Activated naive CD4-positive, alpha-beta T cell treated with anti-CD3 and anti-CD28 coated beads for 36 hours (primary cell): ENCODE measurements at regions of chr2 and their contacts with region 1.

Region 1: GRCh38 chr2:240560480-240561326 is 546 bp downstream of the DUSP28 start:
- DNase-seq: peak; percentile 100
- H3K4me3 Mint-ChIP-seq: peak overlapping the region; percentile 94
- H3K27ac Mint-ChIP-seq: peak overlapping the region; percentile 99
- H3K4me1 Mint-ChIP-seq: peaks cover 69% of the 10 kb centered on the region
- H3K27me3 Mint-ChIP-seq: no peaks in the 10 kb centered on the region

Region 2: GRCh38 chr2:240586198-240586918 is 25.7 kb after region 1 on chr2 and contains the start of gene CAPN10:
- CTCF ChIA-PET with region 1: interaction called, 24 read pairs
- intact Hi-C with region 1: loop called (anchors 1 kb)
- DNase-seq: peak; percentile 97
- H3K4me3 Mint-ChIP-seq: peak within 1 kb of the TSS; percentile 92
- H3K27ac Mint-ChIP-seq: peak within 1 kb of the TSS; percentile 86
- H3K4me1 Mint-ChIP-seq: peaks cover 44% of the 10 kb centered on the region
- H3K27me3 Mint-ChIP-seq: no peaks in the 10 kb centered on the region
- total RNA-seq, gene CAPN10: 24.9 to 28.5 TPM

Region 3: DNA sequence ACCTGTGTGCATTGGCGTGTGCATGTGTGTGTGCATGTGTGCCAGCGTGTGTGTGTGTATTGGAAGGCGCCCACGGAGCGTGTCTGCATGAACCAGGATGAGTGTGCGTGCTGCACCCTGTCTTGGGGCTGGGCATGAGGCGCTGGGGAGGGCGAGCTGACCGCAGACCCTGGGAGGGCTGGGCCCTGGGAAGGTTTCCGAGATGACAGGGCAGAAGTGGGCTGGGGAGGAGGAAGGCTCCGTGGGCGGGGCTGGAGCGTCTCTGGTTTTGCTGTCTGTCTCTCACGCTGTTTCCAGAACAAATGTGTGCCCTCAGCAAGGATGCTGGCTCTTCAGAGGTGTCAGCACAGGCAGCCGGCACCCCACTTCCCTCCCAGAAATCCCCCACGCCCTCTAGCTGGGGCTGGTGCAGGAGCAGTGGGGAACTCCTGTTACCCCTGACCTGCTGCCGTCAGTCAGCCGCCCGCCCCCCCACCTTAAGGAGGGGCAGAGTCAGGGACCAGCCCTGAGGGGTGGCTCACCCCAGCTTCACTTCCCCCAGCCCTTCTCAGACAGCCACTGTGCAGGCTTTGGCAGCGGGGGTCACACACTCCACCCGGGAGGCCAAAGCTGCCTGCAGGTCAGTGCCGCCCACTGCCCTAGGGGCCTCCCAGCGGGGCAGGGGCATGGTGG is 64.4 kb after region 1 on chr2 and contains the start of gene GPR35:
- CTCF ChIA-PET with region 1: interaction called, 6 read pairs
- intact Hi-C with region 1: loop called (anchors 1 kb)
- DNase-seq: peak; percentile 86
- H3K4me3 Mint-ChIP-seq: peak within 1 kb of the TSS; percentile 42
- H3K27ac Mint-ChIP-seq: peak within 1 kb of the TSS; percentile 47
- H3K4me1 Mint-ChIP-seq: peaks cover 51% of the 10 kb centered on the region
- H3K27me3 Mint-ChIP-seq: no peaks in the 10 kb centered on the region
- total RNA-seq, gene GPR35: 2.5 to 2.6 TPM